ENCODE measurements at regions of chr4 and their contacts with region 1.

Region 1: DNA sequence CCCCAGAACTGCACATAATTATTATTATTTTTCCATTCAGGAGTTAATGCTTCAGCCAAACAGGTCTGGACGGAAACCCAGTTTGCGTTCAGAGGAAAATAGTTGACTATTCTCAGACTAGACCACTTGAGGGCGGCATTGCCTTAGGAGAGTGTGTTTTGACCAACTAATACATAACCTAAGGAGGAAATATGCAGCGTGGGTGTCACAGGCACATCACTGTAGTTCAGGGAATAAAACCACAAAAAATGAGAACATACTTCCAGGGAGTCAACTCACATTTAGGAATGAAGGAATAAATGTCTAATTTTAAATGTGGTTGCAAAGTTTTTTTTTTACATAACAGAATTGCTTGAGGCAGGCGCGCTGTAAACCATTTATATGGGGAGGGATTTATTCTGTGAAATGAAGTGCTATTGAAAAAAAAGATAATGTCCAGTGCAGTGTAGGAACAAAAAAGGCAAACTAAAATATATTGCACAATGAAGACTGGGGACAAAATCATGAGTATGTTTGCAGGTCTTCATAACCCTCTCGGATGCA is 93.3 kb downstream of the SYNPO2 start:
- DNase-seq: peak; percentile 74
- H3K4me3 ChIP-seq: no peak overlapping the region
- H3K27ac ChIP-seq: no peak overlapping the region
- H3K4me1 ChIP-seq: no peaks in the 10 kb centered on the region
- H3K27me3 ChIP-seq: no peaks in the 10 kb centered on the region
- CTCF ChIP-seq: peak; percentile 79

Region 2: GRCh38 chr4:119286377-119287002 is 304.6 kb after region 1 on chr4:
- CTCF ChIA-PET with region 1: no interaction called
- POLR2A ChIA-PET with region 1: no interaction called
- intact Hi-C with region 1: loop called (anchors 1 kb)
- DNase-seq: peak; percentile 73
- H3K4me3 ChIP-seq: no peak overlapping the region
- H3K27ac ChIP-seq: no peak overlapping the region
- H3K4me1 ChIP-seq: peaks cover 12% of the 10 kb centered on the region
- H3K27me3 ChIP-seq: no peaks in the 10 kb centered on the region
- CTCF ChIP-seq: peak; percentile 73

Region 3: GRCh38 chr4:119490335-119490734 is 508.4 kb after region 1 on chr4:
- CTCF ChIA-PET with region 1: no interaction called
- POLR2A ChIA-PET with region 1: no interaction called
- intact Hi-C with region 1: loop called (anchors 5 kb)
- DNase-seq: peak; percentile 39
- H3K4me3 ChIP-seq: no peak overlapping the region
- H3K27ac ChIP-seq: no peak overlapping the region
- H3K4me1 ChIP-seq: no peaks in the 10 kb centered on the region
- H3K27me3 ChIP-seq: no peaks in the 10 kb centered on the region
- CTCF ChIP-seq: peak; percentile 32; the same call in 1 of the 2 replicates

Region 4: DNA sequence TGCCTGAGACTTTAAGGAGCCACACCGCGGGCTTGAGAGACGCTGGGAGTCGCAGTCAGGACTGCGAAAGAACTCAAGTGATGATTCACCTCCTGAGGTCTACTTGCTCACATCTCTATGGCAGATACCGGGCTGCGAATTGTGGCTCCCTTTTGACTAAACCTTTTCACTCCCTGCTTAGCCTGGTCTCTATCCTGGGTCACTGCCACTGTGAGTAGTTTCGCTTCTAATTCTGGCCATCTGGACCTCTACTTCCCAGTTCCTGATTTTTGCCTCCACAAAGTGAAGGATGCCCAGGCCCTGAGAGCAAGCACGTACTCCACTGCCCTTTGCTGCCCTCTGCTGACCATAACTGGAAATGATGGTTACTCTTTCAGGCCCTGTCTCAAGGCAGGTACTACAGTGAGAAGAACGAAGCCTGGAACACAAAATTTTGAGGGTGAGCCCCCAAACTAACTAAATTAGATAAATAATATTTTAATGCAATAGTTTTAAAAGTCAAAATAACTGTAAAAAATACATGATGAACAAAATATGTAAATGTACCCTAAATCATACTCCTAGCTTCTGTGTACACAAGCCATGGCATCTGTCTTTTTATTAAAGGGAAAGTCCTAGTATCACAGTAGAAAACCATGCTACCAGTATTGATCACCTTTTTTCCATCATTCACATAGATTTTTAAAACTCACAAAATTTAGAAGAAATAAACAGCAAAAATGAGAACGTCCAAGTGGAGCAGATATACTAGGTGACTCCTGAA is 1068.0 kb after region 1 on chr4:
- CTCF ChIA-PET with region 1: no interaction called
- POLR2A ChIA-PET with region 1: no interaction called
- intact Hi-C with region 1: loop called (anchors 5 kb)
- DNase-seq: peak; percentile 80
- H3K4me3 ChIP-seq: no peak overlapping the region
- H3K27ac ChIP-seq: no peak overlapping the region
- H3K4me1 ChIP-seq: peaks cover 18% of the 10 kb centered on the region
- H3K27me3 ChIP-seq: no peaks in the 10 kb centered on the region
- CTCF ChIP-seq: peak; percentile 82

Measured in A673 (cell line).